ENCODE measurements at regions of chr15 and their contacts with region 1.

Region 1: DNA sequence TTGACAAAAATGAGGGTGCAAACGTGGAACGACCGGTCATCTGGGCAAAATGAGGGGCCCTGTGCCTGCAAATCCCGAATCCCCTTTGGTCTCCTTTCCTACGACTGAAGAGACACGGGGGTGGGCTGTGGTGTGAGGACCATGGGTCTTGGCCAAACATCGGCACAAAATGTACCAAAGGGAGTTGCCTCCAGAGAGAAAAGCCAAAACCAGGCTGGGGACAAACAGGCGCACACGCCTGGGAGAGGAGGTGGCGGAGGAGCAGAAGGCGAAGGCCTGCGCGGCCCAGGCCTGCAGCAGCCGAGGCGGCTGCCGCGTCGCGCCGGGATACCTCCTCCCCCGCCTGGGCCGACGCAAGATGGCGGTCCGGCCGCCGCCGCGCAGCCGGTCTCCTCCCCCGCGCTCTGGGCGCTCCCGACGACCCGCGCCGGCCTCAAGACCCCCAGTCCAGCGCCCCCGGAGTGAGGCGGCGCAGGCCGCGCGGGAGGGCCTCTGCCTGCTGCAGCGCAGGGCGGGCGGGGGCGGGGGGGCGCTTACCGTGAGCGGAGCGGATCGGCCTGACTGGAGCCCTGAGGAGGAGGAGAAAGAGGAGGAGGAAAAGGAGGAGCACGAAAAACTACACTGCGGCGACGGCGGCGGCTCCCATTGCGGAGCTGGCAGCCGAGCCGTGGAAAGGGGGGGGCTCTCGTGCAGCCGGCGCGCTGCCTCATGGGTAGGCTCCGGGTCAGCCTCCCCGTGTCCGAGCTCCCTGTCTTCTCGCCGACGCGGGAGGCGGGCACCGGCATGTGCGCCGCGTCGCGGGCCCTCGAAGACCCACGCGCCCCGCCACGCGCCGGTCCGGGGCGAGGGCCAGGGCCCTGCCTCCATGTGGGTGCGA is at the start of gene ZNF280D:
- DNase-seq: peak; percentile 85 to 95
- ATAC-seq: peak; percentile 95 to 97
- H3K4me3 ChIP-seq: peak within 1 kb of the TSS; percentile 55
- H3K27ac ChIP-seq: peak within 1 kb of the TSS; percentile 93 to 98
- H3K4me1 ChIP-seq: peaks cover 23% of the 10 kb centered on the region
- CTCF ChIP-seq: no peak
- EP300 ChIP-seq: no peak
- POLR2A ChIP-seq: peak; percentile 61
- RAD21 ChIP-seq: 0 out of 5 replicates have a peak, but pooled peaks of 1 of the 2 experiments have one; percentile 20
- polyA plus RNA-seq, gene ZNF280D: 18.0 and 21.8 TPM in 2 replicates

Region 2: DNA sequence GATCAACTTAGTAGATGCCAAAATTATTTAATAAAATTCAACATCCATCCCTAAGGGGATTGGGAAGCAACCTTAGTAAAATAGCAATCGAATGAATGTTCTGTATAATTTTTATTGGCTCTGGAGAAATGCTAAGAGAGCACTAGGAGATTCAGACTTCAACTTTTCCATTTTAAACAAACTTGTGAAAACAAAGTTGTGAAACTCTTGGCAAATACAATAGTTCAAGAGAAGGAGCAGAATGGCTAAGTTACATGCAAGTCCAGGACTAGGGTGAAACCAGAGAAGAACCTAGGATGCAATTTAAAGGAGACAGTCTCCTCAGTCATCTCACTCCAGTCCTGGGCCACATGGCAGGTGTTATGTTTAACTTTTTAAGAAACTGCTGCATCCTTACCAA is 16.8 kb after region 1 on chr15:
- CTCF ChIA-PET with region 1: interaction called, 5 read pairs
- POLR2A ChIA-PET with region 1: interaction called, 10 read pairs
- DNase-seq: no peak
- ATAC-seq: no peak
- H3K4me3 ChIP-seq: no peak overlapping the region
- H3K27ac ChIP-seq: no peak overlapping the region
- H3K4me1 ChIP-seq: peaks cover 5% of the 10 kb centered on the region; the same call in 1 of the 3 replicates
- CTCF ChIP-seq: no peak
- EP300 ChIP-seq: no peak
- POLR2A ChIP-seq: no peak
- RAD21 ChIP-seq: no peak

Region 3: DNA sequence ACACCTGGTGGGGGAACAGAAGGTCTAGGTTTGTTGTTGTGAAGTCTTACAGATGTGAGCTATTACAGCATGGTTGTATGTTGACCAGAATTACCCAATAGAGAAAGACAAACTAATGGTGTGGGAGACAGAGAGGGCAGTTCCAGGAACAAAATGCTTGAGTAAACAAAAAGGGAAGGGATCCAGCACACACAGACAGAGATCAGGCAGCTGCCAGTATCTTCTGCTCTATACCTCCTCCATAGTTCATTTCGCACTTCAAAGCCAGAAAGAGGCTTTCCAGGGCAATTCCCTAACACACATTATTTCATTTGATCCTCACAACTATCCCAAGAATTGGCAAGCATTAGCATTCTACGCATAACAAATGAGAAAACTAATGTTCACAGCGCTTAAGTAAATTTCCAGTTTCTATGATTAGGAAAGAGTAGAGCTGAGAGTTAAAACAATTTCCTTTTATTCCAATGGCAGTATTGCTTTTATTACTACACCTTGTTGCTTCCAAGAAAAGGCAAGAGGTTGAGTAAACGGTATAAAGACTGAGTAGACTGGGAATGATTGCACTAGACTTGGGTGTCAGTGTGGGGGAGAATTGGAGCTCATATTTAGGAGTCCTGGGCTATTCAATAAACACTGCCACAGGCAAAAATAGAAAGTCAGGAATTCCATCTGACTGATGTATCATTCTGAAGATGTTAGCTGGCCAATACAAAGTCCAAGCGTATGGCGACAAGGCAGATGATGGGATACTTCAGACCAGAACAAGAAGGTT is 39.9 kb after region 1 on chr15:
- CTCF ChIA-PET with region 1: no interaction called
- POLR2A ChIA-PET with region 1: interaction called, 10 read pairs
- DNase-seq: peak in 1 of 2 experiments; percentile 42
- ATAC-seq: peak; percentile 55 to 77; a peak in 5 of 6 replicates
- H3K4me3 ChIP-seq: 0 out of 3 replicates have a peak overlapping the region, but pooled peaks have one; percentile 0
- H3K27ac ChIP-seq: peak overlapping the region in 1 of 2 experiments; percentile 12; a peak in 1 of 6 replicates
- H3K4me1 ChIP-seq: peaks cover 17% of the 10 kb centered on the region
- CTCF ChIP-seq: no peak
- EP300 ChIP-seq: no peak
- POLR2A ChIP-seq: no peak
- RAD21 ChIP-seq: no peak

Region 4: DNA sequence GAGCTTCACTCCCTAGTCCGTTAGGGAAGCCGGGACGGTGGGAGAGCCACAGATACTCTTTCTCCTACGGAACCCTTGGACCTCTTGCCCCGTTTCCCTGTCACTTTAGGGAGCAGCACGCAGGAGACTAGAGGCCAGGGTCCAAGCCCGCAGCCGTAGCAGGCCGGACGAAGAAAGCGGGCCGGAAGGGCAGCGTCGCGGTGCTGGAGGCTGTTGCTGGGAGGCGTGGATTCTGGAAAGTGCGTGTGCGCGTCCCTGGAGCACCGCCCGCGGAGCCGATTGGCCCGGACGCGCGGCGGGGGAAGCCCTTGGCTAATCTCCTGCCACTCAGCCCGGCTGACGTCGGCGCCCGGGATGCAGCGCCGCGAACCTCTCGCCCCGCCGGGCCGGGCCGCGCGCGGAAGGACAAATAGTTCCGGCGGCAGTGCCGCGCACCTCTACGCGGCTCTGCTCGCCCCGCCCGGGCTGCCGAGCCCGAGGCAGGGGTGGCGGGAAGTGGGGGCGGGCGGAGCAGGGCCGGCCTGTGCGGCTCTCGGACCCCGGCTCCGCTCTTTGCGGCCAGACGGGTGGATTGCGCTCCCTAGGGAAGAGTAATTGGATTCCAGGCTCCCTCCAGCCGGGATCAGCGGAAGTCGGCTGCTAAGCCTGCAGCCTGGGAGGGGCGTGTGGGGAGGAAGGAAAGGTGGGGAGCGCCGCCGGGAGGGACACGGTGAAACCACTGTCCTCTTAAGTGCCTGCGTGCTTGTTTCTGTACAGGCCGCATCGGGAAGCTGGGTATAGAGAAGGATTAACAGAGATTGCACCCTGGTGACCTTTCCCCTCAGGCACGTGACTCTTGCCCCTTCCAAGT is 154.0 kb after region 1 on chr15:
- CTCF ChIA-PET with region 1: no interaction called
- POLR2A ChIA-PET with region 1: interaction called, 15 read pairs
- DNase-seq: peak; percentile 89 to 98
- ATAC-seq: peak; percentile 96 to 97
- H3K4me3 ChIP-seq: peak overlapping the region; percentile 53
- H3K27ac ChIP-seq: peak overlapping the region; percentile 92 to 95
- H3K4me1 ChIP-seq: peaks cover 14% of the 10 kb centered on the region
- CTCF ChIP-seq: peak; percentile 34; the same call in 2 of the 3 replicates
- EP300 ChIP-seq: peak; percentile 10 to 32; a peak in 1 of 5 replicates
- POLR2A ChIP-seq: peak; percentile 90
- RAD21 ChIP-seq: peak in 1 of 2 experiments; percentile 62; a peak in 4 of 5 replicates

Region 5: GRCh38 chr15:56969265-56969895 is 236.2 kb after region 1 on chr15:
- CTCF ChIA-PET with region 1: no interaction called
- POLR2A ChIA-PET with region 1: no interaction called
- DNase-seq: no peak
- ATAC-seq: no peak
- H3K4me3 ChIP-seq: no peak overlapping the region
- H3K27ac ChIP-seq: no peak overlapping the region
- H3K4me1 ChIP-seq: peaks cover 65% of the 10 kb centered on the region
- CTCF ChIP-seq: no peak
- EP300 ChIP-seq: no peak
- POLR2A ChIP-seq: no peak
- RAD21 ChIP-seq: no peak